Activated naive CD4-positive, alpha-beta T cell treated with anti-CD3 and anti-CD28 coated beads for 36 hours (primary cell): ENCODE measurements at regions of chr1 and their contacts with region 1.

Region 1: GRCh38 chr1:161013488-161014230 is 7.3 kb downstream of the F11R start:
- DNase-seq: peak; percentile 87
- H3K4me3 Mint-ChIP-seq: peak overlapping the region; percentile 68
- H3K27ac Mint-ChIP-seq: peak overlapping the region; percentile 89
- H3K4me1 Mint-ChIP-seq: peaks cover 32% of the 10 kb centered on the region
- H3K27me3 Mint-ChIP-seq: no peaks in the 10 kb centered on the region

Region 2: DNA sequence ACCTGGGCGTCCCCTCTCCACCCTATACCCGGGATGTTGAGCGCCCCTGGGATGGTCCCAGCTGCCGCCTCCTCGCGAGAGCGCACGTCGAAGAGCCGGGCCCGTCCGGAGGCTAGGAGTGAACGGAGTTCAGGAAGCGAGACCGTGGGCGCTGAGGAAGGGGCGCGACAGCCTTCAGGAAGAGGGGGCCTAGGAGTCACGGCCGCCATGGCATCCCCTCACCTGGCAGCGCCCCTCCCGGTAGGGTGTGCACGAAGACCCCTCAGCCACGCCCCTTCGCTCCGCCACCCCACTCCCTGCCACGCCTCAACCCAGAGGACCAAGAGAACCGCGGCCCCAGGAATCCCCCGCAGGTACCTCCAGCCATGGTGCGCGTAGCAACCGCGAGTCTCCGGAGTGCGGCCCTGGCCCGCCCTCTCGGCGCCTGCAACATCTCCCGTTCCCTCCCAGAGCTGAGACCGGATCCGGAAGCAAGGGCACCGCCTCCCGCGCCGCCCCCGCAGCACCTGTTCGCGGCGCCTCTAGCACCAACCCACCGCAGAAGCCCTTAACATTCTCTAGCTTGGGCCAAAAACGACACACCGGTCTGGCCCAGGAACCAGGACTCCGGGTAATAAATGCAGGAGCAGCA is 25.0 kb after region 1 on chr1 and contains the start of gene TSTD1:
- CTCF ChIA-PET with region 1: no interaction called
- intact Hi-C with region 1: loop called (anchors 2 kb)
- DNase-seq: peak; percentile 92
- H3K4me3 Mint-ChIP-seq: peak within 1 kb of the TSS; percentile 88
- H3K27ac Mint-ChIP-seq: peak within 1 kb of the TSS; percentile 77
- H3K4me1 Mint-ChIP-seq: peaks cover 36% of the 10 kb centered on the region
- H3K27me3 Mint-ChIP-seq: no peaks in the 10 kb centered on the region
- total RNA-seq, gene TSTD1: 50.3 to 51.5 TPM